Vagina (tissue), 2 donors: ENCODE measurements at regions of chr6 and their contacts with region 1.

Region 1: GRCh38 chr6:4055420-4056041 is 23.4 kb downstream of the FAM217A start:
- DNase-seq: no peak
- H3K4me3 ChIP-seq: no peak overlapping the region
- H3K27ac ChIP-seq: no peak overlapping the region
- H3K4me1 ChIP-seq: no peaks in the 10 kb centered on the region
- H3K27me3 ChIP-seq: no peaks in the 10 kb centered on the region
- CTCF ChIP-seq: no peak
- POLR2A ChIP-seq: no peak

Region 2: GRCh38 chr6:4155848-4156466 is 100.4 kb after region 1 on chr6:
- intact Hi-C with region 1: loop called (anchors 10 kb)
- DNase-seq: no peak
- H3K4me3 ChIP-seq: no peak overlapping the region
- H3K27ac ChIP-seq: no peak overlapping the region
- H3K4me1 ChIP-seq: no peaks in the 10 kb centered on the region
- H3K27me3 ChIP-seq: no peaks in the 10 kb centered on the region
- CTCF ChIP-seq: peak; percentile 75 to 84 (median 77)
- POLR2A ChIP-seq: no peak

Region 3: GRCh38 chr6:4351520-4352315 is 296.2 kb after region 1 on chr6:
- intact Hi-C with region 1: no loop called
- DNase-seq: peak in 1 of 2 donors; percentile 91
- H3K4me3 ChIP-seq: peak overlapping the region; percentile 26 to 31
- H3K27ac ChIP-seq: peak overlapping the region; percentile 74
- H3K4me1 ChIP-seq: peaks cover 18% of the 10 kb centered on the region
- H3K27me3 ChIP-seq: no peaks in the 10 kb centered on the region
- CTCF ChIP-seq: no peak
- POLR2A ChIP-seq: no peak